Naive thymus-derived CD4-positive, alpha-beta T cell (primary cell): ENCODE measurements at regions of chr17 and their contacts with region 1.

Region 1: DNA sequence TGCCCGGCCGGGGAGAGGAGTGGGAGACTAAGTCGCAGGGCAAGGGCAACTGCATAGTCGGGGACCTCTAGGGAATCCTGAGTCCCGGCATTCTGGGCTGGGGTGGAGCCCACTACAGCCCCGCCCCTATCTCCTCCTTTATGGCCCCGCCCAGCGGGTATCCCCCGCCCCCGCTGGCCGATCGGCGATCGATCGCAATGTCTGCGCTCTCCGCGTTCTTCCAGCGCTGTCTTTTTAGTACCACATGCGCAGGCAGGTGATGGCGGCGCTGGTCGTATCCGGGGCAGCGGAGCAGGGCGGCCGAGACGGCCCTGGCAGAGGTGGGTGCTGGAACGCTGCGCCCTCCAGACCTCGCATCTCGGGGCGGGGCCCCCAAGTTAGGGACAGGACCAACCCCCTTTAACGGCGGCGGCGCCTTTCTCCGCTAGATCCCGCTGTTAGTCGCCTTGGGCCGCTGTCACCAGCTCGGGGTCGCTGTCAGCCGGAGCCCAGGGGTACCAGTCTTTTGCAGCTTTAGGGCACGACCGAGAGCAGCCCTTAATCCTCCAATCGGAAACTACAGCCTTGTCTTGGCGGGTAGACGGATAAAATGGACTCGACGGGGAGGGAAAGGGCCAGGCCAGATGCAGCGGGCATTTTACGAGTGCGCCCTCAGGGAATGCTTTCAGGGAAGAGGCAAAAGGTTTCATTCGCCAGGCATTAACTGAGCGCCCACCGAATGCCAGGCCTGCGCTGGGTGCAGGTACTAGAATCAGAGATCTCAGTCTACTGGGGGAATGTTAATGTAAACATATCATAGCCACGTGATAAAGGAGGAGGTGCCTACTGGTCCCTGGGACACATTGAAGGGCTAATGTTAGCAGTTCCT is at the start of gene DPH1:
- DNase-seq: peak; percentile 72 to 88 (median 83)
- ATAC-seq: peak; percentile 93
- H3K4me3 ChIP-seq: peak within 1 kb of the TSS; percentile 95
- H3K4me3 Mint-ChIP-seq: peak within 1 kb of the TSS; percentile 92 to 99 (median 96)
- H3K27ac ChIP-seq: peak within 1 kb of the TSS; percentile 85
- H3K27ac Mint-ChIP-seq: peak within 1 kb of the TSS; percentile 65 to 96 (median 89)
- H3K4me1 ChIP-seq: peaks cover 13 to 27% of the 10 kb centered on the region in 2 donors
- H3K4me1 Mint-ChIP-seq: peaks cover 17 to 43% (median 29%) of the 10 kb centered on the region in 7 donors
- H3K27me3 ChIP-seq: peaks cover 0 to 4% of the 10 kb centered on the region in 2 donors
- H3K27me3 Mint-ChIP-seq: peaks cover 9 to 38% (median 15%) of the 10 kb centered on the region in 5 donors
- total RNA-seq, gene DPH1: 47.3 to 124 (median 97.6) TPM

Region 2: GRCh38 chr17:1648963-1649843 is 380.9 kb before region 1 on chr17:
- CTCF ChIA-PET with region 1: no interaction called
- POLR2A ChIA-PET with region 1: no interaction called
- intact Hi-C with region 1: loop called in 1 of 2 experiments (anchors 5 kb)
- DNase-seq: peak; percentile 88 to 97 (median 93)
- ATAC-seq: peak; percentile 90
- H3K4me3 ChIP-seq: peak overlapping the region; percentile 64
- H3K4me3 Mint-ChIP-seq: peak overlapping the region; percentile 65 to 81 (median 74)
- H3K27ac ChIP-seq: peak overlapping the region; percentile 69
- H3K27ac Mint-ChIP-seq: peak overlapping the region in 5 of 9 donors; percentile 38 to 58 (median 55)
- H3K4me1 ChIP-seq: peaks cover 15 to 21% of the 10 kb centered on the region in 2 donors
- H3K4me1 Mint-ChIP-seq: peaks cover 0 to 38% (median 10%) of the 10 kb centered on the region in 7 donors
- H3K27me3 ChIP-seq: no peaks in the 10 kb centered on the region
- H3K27me3 Mint-ChIP-seq: no peaks in the 10 kb centered on the region

Region 3: DNA sequence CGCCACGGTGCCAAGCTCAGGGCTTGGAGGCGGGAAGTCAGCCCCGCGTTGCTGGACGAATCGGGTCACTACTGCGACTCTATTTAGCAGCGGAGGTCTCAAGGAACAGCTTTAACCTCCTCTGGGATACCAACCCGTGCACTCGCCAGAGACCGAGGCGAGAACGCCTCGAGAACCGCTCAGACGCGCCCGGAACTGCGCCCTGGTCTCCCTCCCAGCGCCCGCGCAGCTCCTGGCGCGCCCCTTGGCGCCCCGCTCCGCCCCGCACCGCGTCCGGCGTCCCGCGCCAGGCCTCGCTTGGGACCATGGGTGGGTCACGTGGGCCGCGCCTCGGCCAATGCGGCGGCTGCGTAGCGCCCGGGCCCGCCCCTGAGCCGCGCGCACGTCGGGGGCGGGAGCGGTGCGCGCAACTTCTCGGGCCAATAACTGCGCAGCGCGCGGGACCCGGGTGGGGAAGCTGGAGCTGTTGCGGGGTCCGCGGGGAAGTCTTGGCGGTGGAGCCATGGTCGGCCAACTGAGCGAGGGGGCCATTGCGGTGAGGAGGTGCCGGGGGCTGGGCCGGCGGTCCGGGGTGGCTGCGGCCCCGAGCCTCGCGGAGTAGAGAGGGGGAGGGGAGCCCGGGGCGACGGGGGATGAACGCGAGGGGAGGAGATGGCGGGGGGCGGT is 200.4 kb before region 1 on chr17 and contains the starts of genes RPA1 and SMYD4:
- CTCF ChIA-PET with region 1: no interaction called
- POLR2A ChIA-PET with region 1: no interaction called
- intact Hi-C with region 1: loop called (anchors 1 to 5 kb)
- DNase-seq: peak; percentile 84 to 94 (median 89)
- ATAC-seq: peak; percentile 100
- H3K4me3 ChIP-seq: peak within 1 kb of the TSS; percentile 82
- H3K4me3 Mint-ChIP-seq: peak within 1 kb of the TSS; percentile 89 to 100 (median 98)
- H3K27ac ChIP-seq: peak within 1 kb of the TSS; percentile 86
- H3K27ac Mint-ChIP-seq: peak within 1 kb of the TSS; percentile 89 to 99 (median 95)
- H3K4me1 ChIP-seq: peaks cover 17 to 26% of the 10 kb centered on the region in 2 donors
- H3K4me1 Mint-ChIP-seq: peaks cover 39 to 80% (median 67%) of the 10 kb centered on the region in 7 donors
- H3K27me3 ChIP-seq: no peaks in the 10 kb centered on the region
- H3K27me3 Mint-ChIP-seq: no peaks in the 10 kb centered on the region
- total RNA-seq, gene RPA1: 57.8 to 264 (median 110) TPM
- total RNA-seq, gene SMYD4: 19.8 to 38.4 (median 32.5) TPM

Region 4: DNA sequence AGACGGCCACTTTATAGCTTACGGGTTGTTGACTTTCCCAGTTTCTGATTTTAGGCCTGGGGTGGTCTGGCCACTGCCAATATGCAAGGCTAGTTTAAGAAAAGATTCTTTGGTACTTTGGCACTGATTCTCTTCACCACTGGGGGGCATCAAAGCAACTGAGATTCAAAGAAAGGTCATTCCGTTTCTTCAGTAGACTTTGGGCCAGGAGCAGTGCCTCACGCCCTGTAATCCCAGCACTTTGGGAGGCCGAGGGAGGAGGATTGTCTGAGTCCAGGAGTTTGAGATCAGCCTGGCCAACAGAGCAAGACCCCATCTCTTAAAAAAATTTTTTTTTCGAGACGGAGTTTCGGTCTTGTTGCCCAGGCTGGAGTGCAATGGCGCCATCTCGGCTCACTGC is 147.3 kb before region 1 on chr17:
- CTCF ChIA-PET with region 1: interaction called, 4 read pairs
- POLR2A ChIA-PET with region 1: no interaction called
- intact Hi-C with region 1: loop called in 1 of 2 experiments (anchors 10 kb)
- DNase-seq: peak in 4 of 9 donors; percentile 9 to 30 (median 20)
- ATAC-seq: peak; percentile 46
- H3K4me3 ChIP-seq: no peak overlapping the region
- H3K4me3 Mint-ChIP-seq: no peak overlapping the region
- H3K27ac ChIP-seq: no peak overlapping the region
- H3K27ac Mint-ChIP-seq: peak overlapping the region in 3 of 9 donors; percentile 28 to 74 (median 47)
- H3K4me1 ChIP-seq: no peaks in the 10 kb centered on the region
- H3K4me1 Mint-ChIP-seq: peaks cover 0 to 31% (median 0%) of the 10 kb centered on the region in 7 donors
- H3K27me3 ChIP-seq: no peaks in the 10 kb centered on the region
- H3K27me3 Mint-ChIP-seq: no peaks in the 10 kb centered on the region

Region 5: GRCh38 chr17:1908699-1909309 is 121.3 kb before region 1 on chr17:
- CTCF ChIA-PET with region 1: no interaction called
- POLR2A ChIA-PET with region 1: interaction called, 4 read pairs
- intact Hi-C with region 1: loop called (anchors 1 to 2 kb)
- DNase-seq: peak in 7 of 9 donors; percentile 7 to 38 (median 25)
- ATAC-seq: peak; percentile 57
- H3K4me3 ChIP-seq: peak overlapping the region; percentile 36
- H3K4me3 Mint-ChIP-seq: peak overlapping the region; percentile 48 to 76 (median 61)
- H3K27ac ChIP-seq: no peak overlapping the region
- H3K27ac Mint-ChIP-seq: no peak overlapping the region
- H3K4me1 ChIP-seq: no peaks in the 10 kb centered on the region
- H3K4me1 Mint-ChIP-seq: peaks cover 2 to 16% (median 14%) of the 10 kb centered on the region in 7 donors
- H3K27me3 ChIP-seq: peaks cover 0 to 14% of the 10 kb centered on the region in 2 donors
- H3K27me3 Mint-ChIP-seq: peaks cover 44 to 76% (median 55%) of the 10 kb centered on the region in 5 donors

Region 6: DNA sequence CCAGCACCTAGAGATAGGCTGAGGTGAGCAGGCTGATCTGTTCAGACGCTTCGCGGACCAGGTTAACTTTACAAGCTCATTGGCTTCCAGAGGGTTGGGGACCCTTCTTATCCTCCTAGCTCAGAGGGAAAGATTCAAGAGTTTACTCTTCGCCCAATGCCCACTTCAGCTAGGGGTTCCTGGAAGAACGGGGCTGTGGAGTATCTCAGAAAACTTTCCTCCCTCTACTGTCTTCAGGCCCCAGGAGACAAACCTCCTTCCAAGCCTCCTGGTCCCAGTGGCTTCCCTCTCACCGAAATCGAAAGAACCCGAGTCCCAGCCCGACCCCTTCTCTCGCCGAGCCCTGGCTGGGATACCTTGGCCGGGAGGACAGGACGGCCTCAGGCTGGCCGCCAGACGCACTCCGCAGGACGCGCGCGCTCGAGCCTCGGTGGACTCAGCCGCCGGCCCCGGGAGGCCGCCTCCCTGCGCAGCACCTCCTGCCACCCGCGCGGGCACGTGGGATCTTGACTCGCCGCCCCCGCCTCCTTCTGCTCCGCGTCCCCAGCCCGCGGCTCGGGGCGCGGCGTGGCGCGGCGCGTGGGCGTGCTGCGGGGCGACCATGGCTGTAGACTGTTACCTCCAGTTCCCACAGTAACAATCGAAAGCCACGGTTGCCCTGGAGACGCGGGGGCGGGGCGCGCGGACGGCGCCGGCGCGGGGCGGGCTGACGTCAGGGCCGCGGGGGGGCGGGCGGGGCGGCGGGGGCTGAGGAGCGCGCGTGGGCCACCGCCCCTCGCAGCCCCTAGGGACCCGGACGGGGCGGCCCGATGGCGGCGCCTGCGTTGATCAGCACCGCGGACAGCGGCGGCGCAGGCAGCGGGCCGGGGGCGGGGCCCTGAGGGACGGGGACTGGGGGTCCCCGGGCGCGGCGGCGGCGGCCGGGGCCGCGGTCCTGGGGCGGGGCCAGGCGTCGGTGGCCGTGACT is 19.5 kb after region 1 on chr17:
- CTCF ChIA-PET with region 1: no interaction called
- POLR2A ChIA-PET with region 1: interaction called, 5 read pairs
- intact Hi-C with region 1: loop called (anchors 1 to 2 kb)
- DNase-seq: peak; percentile 82 to 96 (median 86)
- ATAC-seq: peak; percentile 79
- H3K4me3 ChIP-seq: peak overlapping the region; percentile 75
- H3K4me3 Mint-ChIP-seq: peak overlapping the region; percentile 51 to 81 (median 74)
- H3K27ac ChIP-seq: peak overlapping the region; percentile 42
- H3K27ac Mint-ChIP-seq: peak overlapping the region in 5 of 9 donors; percentile 39 to 83 (median 66)
- H3K4me1 ChIP-seq: peaks cover 20 to 27% of the 10 kb centered on the region in 2 donors
- H3K4me1 Mint-ChIP-seq: peaks cover 8 to 37% (median 28%) of the 10 kb centered on the region in 7 donors
- H3K27me3 ChIP-seq: peaks cover 0 to 9% of the 10 kb centered on the region in 2 donors
- H3K27me3 Mint-ChIP-seq: peaks cover 0 to 15% (median 0%) of the 10 kb centered on the region in 5 donors